WTC11 (cell line): ENCODE measurements at regions of chr3 and their contacts with region 1.

Region 1: DNA sequence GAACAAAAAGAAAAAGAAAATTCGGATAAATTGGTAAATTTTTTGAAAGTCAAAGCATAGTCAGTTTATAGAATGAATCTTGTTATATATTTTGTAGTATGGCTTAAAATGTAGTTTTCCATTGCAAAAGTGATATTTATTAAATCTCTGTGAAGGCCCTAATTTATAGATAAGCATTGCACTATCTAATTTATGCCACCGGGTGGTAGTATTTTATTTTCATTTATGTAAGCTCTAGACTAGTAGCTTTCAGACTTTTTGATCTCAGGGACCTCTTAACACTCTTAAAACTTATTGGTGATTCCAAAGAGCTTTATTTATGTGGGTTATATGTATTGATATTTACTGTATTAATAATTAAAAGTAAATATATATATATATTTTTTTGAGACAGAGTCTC is 133.9 kb upstream of the LRRFIP2 start:
- DNase-seq: no peak
- ATAC-seq: no peak; the same call in 1 of the 2 replicates
- H3K4me3 Mint-ChIP-seq: no peak overlapping the region
- H3K27ac Mint-ChIP-seq: no peak overlapping the region
- H3K4me1 Mint-ChIP-seq: no peaks in the 10 kb centered on the region
- H3K27me3 Mint-ChIP-seq: no peaks in the 10 kb centered on the region
- CTCF ChIP-seq: no peak

Region 2: DNA sequence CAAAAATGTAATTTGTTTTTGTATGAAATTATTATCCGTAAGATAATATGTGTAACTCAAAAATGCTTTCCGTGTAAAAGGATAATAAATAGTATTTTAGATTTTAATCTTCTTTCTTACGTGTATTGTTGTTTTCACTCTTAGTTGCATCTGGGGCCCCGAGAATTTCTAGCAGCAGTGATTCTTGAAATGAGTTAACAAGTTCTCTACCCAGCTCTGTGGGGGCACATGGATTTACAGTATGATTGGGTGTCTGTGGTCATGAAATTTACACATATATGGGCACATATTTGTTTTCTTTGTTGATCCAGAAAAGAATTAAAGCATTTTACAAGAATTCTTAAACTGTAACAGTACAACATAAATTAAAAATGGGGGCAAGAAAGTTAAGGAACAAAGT is 12.0 kb after region 1 on chr3:
- CTCF ChIA-PET with region 1: interaction called, 11 read pairs
- POLR2A ChIA-PET with region 1: no interaction called
- DNase-seq: no peak
- ATAC-seq: no peak
- H3K4me3 Mint-ChIP-seq: no peak overlapping the region
- H3K27ac Mint-ChIP-seq: no peak overlapping the region
- H3K4me1 Mint-ChIP-seq: no peaks in the 10 kb centered on the region
- H3K27me3 Mint-ChIP-seq: no peaks in the 10 kb centered on the region
- CTCF ChIP-seq: no peak

Region 3: DNA sequence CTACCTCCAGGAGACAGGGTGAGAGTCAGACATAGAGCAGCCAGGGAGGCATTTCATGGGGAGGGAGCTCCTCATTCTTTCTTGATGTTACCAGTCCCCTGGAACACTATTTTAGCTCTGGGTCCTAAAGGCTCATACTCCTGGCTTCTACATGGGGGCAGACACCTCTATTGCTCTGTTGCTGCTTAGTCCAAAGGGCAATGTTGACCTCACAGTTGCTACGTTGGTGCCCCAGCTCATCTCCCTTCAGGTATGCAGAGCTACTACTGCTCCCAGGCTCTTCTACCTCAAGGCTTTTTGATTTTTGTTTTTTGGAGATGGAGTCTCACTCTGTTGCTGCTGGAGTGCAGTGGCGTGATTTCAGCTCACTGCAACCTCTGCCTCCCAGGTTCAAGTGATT is 111.7 kb after region 1 on chr3:
- CTCF ChIA-PET with region 1: no interaction called
- POLR2A ChIA-PET with region 1: no interaction called
- DNase-seq: no peak
- ATAC-seq: no peak
- H3K4me3 Mint-ChIP-seq: no peak overlapping the region
- H3K27ac Mint-ChIP-seq: no peak overlapping the region; the same call in 1 of the 2 replicates
- H3K4me1 Mint-ChIP-seq: no peaks in the 10 kb centered on the region
- H3K27me3 Mint-ChIP-seq: no peaks in the 10 kb centered on the region
- CTCF ChIP-seq: no peak